ENCODE measurements at regions of chr2 and their contacts with region 1.

Region 1: DNA sequence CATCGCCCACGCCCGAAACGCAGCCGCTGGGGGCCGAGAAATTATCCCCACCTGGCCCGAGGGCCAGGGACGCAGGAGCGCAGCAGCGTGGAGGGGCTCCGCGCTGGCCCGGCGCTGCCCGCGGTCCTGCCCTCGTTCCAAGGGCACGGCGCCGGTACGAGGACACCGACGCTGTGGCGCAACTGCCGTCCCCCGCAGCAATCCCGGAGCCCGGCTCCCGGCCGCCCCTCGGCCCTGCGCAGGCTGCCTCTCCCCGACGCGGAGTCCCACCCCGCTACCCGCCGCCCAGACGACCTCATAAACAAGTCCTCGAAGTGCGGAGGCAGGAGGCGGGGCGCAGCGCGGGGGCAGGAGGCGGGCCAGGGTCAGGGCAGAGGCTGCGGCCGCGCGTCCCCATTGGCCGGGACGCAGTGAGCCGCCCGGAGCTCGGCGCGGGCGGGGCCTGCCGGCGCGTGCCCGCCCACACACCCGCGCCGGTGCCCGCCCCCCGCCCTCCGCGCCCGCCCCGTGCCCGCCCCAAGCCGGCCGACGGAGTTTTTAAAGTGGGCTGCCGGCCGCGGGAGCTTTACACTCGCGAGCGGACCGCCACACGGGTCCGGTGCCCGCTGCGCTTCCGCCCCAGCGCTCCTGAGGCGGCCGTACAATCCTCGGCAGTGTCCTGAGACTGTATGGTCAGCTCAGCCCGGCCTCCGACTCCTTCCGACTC is at the start of gene EPAS1:
- DNase-seq: peak; percentile 97 to 98
- H3K4me3 ChIP-seq: peak within 1 kb of the TSS; percentile 65 to 91
- H3K27ac ChIP-seq: peak within 1 kb of the TSS; percentile 82 to 94
- H3K4me1 ChIP-seq: peaks cover 0 to 28% (median 10%) of the 10 kb centered on the region in 4 donors
- H3K27me3 ChIP-seq: no peaks in the 10 kb centered on the region
- CTCF ChIP-seq: no peak

Region 2: GRCh38 chr2:44974064-44974715 is 1322.8 kb before region 1 on chr2:
- intact Hi-C with region 1: no loop called
- DNase-seq: no peak
- H3K4me3 ChIP-seq: no peak overlapping the region
- H3K27ac ChIP-seq: no peak overlapping the region
- H3K4me1 ChIP-seq: no peaks in the 10 kb centered on the region
- H3K27me3 ChIP-seq: peaks cover 0 to 59% of the 10 kb centered on the region in 2 donors
- CTCF ChIP-seq: peak in 1 of 2 experiments; percentile 6

Region 3: GRCh38 chr2:46010925-46011490 is 286.0 kb before region 1 on chr2:
- intact Hi-C with region 1: loop called (anchors 5 kb)
- DNase-seq: no peak
- H3K4me3 ChIP-seq: no peak overlapping the region
- H3K27ac ChIP-seq: no peak overlapping the region
- H3K4me1 ChIP-seq: peaks cover 0 to 16% (median 6%) of the 10 kb centered on the region in 4 donors
- H3K27me3 ChIP-seq: no peaks in the 10 kb centered on the region
- CTCF ChIP-seq: peak; percentile 66 to 82

Region 4: DNA sequence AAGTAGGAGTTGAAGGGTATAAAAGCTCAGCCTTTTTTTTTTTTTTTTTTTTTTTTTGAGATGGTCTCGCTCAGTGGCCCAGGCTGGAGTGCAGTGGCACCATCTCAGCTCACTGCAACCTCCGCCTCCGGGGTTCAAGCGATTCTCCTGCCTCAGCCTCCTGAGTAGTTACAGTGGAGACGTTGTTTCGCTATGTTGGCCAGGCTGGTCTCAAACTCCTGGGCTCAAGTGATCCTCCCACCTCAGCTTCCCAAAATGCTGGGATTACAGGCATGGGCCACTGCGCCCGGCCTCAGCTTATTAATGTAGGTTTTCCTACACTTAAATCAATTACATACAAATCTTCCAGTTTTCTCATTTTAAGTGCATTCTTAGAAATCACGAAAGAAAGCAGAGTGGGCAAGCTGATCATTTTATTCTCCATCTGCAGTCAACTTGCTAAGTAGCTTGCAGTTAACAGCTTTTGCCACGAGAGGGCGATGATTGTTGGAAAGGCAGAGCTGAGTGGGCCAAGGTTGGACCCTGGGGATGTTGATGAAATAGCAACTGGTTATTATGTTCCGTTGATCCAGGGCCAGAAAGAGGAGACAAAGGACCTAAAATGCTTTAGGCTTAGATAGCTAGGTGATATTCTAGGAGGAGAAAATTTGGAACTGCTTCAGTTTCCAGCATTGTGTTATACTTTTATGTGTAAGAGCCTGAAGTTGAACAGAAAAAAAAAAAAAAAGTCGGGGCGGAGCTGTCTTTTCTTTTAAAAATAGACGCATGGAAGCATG is 234.2 kb before region 1 on chr2:
- intact Hi-C with region 1: loop called (anchors 5 kb)
- DNase-seq: peak; percentile 89 to 95
- H3K4me3 ChIP-seq: no peak overlapping the region
- H3K27ac ChIP-seq: no peak overlapping the region
- H3K4me1 ChIP-seq: peaks cover 0 to 12% (median 9%) of the 10 kb centered on the region in 4 donors
- H3K27me3 ChIP-seq: no peaks in the 10 kb centered on the region
- CTCF ChIP-seq: peak; percentile 88 to 90

Region 5: DNA sequence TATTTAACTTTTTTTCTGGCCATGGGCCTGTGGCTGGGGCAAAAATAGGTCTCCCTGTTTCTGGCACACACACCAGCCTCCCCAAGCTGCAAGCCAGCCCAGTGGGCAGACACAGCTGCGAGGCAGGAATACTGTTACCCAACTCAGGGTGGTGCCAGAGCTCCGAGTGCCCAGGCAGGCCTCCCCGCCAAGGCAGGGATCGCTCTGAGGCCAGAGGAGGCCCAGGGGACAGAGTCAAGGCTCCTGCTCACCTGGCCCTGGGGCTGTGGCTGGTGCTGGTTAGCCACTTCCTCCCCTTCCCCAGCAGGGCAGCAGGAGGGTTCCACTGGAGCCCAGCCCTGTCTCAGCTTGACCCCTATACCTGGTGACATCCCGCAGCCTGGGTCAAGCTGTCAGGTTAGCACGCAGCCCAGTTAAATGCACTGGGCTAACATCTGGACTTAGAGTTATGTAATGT is 66.8 kb before region 1 on chr2:
- intact Hi-C with region 1: loop called (anchors 10 kb)
- DNase-seq: peak; percentile 53 to 85
- H3K4me3 ChIP-seq: no peak overlapping the region
- H3K27ac ChIP-seq: peak overlapping the region in 1 of 2 donors; percentile 46
- H3K4me1 ChIP-seq: peaks cover 0 to 20% (median 6%) of the 10 kb centered on the region in 4 donors
- H3K27me3 ChIP-seq: no peaks in the 10 kb centered on the region
- CTCF ChIP-seq: peak; percentile 40 to 54

Region 6: GRCh38 chr2:46336283-46336959 is 39.4 kb after region 1 on chr2:
- intact Hi-C with region 1: no loop called
- DNase-seq: no peak
- H3K4me3 ChIP-seq: peak overlapping the region; percentile 37 to 48
- H3K27ac ChIP-seq: peak overlapping the region; percentile 84 to 86
- H3K4me1 ChIP-seq: peaks cover 0 to 98% (median 88%) of the 10 kb centered on the region in 4 donors
- H3K27me3 ChIP-seq: no peaks in the 10 kb centered on the region
- CTCF ChIP-seq: no peak

Region 7: DNA sequence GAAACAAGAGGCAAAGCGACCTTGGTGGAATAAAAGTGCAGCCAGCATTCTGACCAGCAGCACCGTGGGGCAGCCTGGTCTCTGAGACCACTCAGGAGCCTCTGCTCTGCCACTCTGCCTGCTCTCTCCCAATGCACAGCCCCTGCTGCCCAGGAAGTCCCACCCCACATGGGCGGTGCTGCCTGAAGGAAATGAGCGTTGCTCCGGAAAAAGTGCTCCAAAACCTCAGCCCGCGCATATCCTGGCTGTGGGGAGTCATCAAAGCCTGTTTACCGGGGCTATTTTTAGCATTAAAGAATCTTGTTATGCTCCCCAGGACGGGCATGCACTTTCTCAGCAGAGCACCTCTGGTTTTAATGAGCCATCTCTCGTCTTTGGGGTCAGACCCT is 54.8 kb after region 1 on chr2:
- intact Hi-C with region 1: loop called (anchors 5 kb)
- DNase-seq: no peak
- H3K4me3 ChIP-seq: peak overlapping the region in 1 of 2 donors; percentile 5
- H3K27ac ChIP-seq: peak overlapping the region in 1 of 2 donors; percentile 37
- H3K4me1 ChIP-seq: peaks cover 0 to 66% (median 29%) of the 10 kb centered on the region in 4 donors
- H3K27me3 ChIP-seq: no peaks in the 10 kb centered on the region
- CTCF ChIP-seq: no peak